HepG2 (cell line): ENCODE measurements at regions of chr17 and their contacts with region 1.

Region 1: GRCh38 chr17:74873038-74873873 is 462 bp upstream of the FDXR start:
- DNase-seq: peak; percentile 100
- ATAC-seq: peak; percentile 87
- H3K4me3 ChIP-seq: peak overlapping the region; percentile 70 to 95 (median 85)
- H3K27ac ChIP-seq: peak overlapping the region; percentile 70
- H3K4me1 ChIP-seq: peaks cover 84% of the 10 kb centered on the region
- H3K27me3 ChIP-seq: peaks cover 0 to 7% of the 10 kb centered on the region in 2 experiments; a peak in 4 of 5 replicates
- CTCF ChIP-seq: no peak
- EP300 ChIP-seq: peak; percentile 18 to 55; a peak in 1 of 4 replicates
- POLR2A ChIP-seq: peak; percentile 96 to 98
- RAD21 ChIP-seq: no peak; the same call in 1 of the 2 replicates

Region 2: GRCh38 chr17:74430706-74431567 is 442.3 kb before region 1 on chr17:
- CTCF ChIA-PET with region 1: no interaction called
- POLR2A ChIA-PET with region 1: interaction called, 14 read pairs
- in situ Hi-C with region 1: no loop called
- intact Hi-C with region 1: no loop called
- DNase-seq: peak; percentile 95
- ATAC-seq: peak; percentile 58
- H3K4me3 ChIP-seq: peak overlapping the region; percentile 82 to 94 (median 89)
- H3K27ac ChIP-seq: peak overlapping the region; percentile 98
- H3K4me1 ChIP-seq: peaks cover 69% of the 10 kb centered on the region
- H3K27me3 ChIP-seq: no peaks in the 10 kb centered on the region; a peak in 1 of 5 replicates
- CTCF ChIP-seq: peak; percentile 45
- EP300 ChIP-seq: peak in 1 of 2 experiments; percentile 55; a peak in 2 of 4 replicates
- POLR2A ChIP-seq: peak in 1 of 2 experiments; percentile 61; a peak in 3 of 4 replicates
- RAD21 ChIP-seq: peak; percentile 37

Region 3: DNA sequence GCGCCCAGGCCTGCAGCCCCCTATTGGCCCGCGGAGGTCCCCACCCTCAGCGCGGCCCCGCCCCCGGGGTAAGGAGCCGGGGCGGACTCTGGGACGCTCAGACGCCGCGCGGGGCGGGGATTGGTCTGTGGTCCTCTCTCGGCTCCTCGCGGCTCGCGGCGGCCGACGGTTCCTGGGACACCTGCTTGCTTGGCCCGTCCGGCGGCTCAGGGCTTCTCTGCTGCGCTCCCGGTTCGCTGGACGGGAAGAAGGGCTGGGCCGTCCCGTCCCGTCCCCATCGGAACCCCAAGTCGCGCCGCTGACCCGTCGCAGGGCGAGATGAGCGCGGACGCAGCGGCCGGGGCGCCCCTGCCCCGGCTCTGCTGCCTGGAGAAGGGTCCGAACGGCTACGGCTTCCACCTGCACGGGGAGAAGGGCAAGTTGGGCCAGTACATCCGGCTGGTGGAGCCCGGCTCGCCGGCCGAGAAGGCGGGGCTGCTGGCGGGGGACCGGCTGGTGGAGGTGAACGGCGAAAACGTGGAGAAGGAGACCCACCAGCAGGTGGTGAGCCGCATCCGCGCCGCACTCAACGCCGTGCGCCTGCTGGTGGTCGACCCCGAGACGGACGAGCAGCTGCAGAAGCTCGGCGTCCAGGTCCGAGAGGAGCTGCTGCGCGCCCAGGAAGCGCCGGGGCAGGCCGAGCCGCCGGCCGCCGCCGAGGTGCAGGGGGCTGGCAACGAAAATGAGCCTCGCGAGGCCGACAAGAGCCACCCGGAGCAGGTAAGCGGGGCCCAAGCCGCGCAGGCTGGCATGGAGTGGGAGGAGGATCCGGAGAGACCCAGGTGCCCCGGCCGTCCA is 124.5 kb before region 1 on chr17 and contains the start of gene NHERF1:
- CTCF ChIA-PET with region 1: no interaction called
- POLR2A ChIA-PET with region 1: interaction called, 46 read pairs
- in situ Hi-C with region 1: no loop called
- intact Hi-C with region 1: no loop called
- DNase-seq: peak; percentile 88
- ATAC-seq: peak; percentile 65
- H3K4me3 ChIP-seq: peak within 1 kb of the TSS; percentile 95 to 99 (median 99)
- H3K27ac ChIP-seq: peak within 1 kb of the TSS; percentile 96
- H3K4me1 ChIP-seq: peaks cover 70% of the 10 kb centered on the region
- H3K27me3 ChIP-seq: no peaks in the 10 kb centered on the region; a peak in 1 of 5 replicates
- CTCF ChIP-seq: peak; percentile 57
- EP300 ChIP-seq: 0 out of 4 replicates have a peak, but pooled peaks of 1 of the 2 experiments have one; percentile 22
- POLR2A ChIP-seq: peak; percentile 99 to 100
- RAD21 ChIP-seq: peak; percentile 68
- total RNA-seq, gene NHERF1: 138 and 169 TPM in 2 replicates

Region 4: DNA sequence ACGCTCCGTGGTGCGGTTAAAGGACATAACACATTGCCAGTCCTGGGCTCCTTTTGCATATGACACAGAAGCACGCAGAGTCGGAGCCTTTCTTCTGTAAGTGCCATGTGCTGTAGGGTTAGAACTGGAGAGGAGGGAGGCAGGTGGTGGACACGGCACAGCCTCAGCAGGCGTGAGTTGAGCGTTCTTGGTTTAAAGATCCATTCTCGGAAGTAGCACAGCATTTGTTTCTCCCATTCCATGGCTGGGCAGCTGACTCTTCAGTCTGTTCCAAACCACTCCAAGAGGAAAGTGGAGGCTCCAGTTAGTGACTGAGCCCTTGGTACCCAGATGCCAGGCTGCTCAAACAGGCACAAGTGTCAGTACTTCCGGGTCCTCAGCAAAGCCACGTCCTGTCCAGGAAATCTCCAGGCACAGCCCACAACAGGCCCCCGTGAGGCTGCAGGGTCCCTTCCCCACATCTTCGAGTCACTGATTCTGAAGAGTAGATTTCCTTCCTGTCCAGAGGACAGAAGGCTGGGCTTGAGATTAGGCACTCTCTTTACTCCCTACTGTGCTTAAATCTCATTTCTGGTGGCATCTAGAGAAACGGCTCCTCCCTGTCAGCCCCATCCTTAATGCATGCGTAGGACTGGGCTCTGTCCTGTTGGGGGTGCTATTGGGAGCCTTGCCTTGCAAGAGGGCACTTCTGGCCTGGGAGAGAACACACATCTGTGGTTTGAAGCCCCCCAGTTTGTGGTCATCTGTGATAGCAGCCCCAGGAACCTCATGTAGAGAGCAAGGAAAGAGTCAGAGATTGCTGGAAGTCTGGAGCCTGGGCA is 57.5 kb before region 1 on chr17:
- CTCF ChIA-PET with region 1: no interaction called
- POLR2A ChIA-PET with region 1: no interaction called
- in situ Hi-C with region 1: no loop called
- intact Hi-C with region 1: no loop called
- DNase-seq: no peak
- ATAC-seq: no peak
- H3K4me3 ChIP-seq: no peak overlapping the region
- H3K27ac ChIP-seq: no peak overlapping the region
- H3K4me1 ChIP-seq: no peaks in the 10 kb centered on the region
- H3K27me3 ChIP-seq: no peaks in the 10 kb centered on the region
- CTCF ChIP-seq: peak; percentile 43
- EP300 ChIP-seq: no peak
- POLR2A ChIP-seq: no peak
- RAD21 ChIP-seq: no peak

Region 5: DNA sequence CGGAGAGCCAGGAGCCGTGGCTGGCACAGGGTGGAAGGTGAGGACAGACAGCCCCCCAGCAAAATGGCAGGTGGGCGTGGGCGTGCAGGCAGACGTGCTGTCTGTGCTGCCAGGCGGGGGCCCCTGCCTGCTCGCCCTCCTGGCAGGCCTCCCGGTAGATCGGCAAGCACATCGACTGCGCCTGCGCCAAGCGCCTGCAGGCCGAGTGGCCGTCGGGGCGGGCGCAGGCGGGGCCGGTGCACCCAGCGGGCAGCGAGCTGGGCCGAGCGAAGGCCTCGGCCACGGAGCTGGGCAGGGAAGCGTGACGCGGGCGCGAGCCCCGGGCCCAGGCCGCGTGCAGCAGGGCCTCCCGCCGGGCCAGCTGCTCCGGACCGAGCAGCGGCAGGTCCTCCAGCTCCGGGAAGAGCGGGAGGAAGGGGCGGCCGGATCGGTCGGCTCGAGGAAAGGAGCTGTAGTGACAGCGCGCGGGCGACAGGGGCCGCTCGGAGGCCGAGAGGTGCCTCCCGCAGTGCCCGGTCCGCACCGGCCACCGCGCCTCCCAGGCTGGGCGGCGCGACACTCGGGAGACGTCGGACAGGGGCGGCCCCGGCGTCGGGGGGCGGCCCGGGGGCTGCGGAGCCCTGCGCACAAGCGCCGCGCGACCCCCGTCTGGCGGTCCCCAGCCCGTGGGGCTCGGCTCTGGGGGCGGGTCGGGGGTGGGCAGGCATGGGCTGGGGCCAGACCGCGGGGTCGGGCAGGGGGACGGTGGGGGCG is 30.5 kb before region 1 on chr17:
- CTCF ChIA-PET with region 1: no interaction called
- POLR2A ChIA-PET with region 1: interaction called, 15 read pairs
- in situ Hi-C with region 1: no loop called
- intact Hi-C with region 1: no loop called
- DNase-seq: peak; percentile 52
- ATAC-seq: peak; percentile 84
- H3K4me3 ChIP-seq: peak overlapping the region; percentile 23 to 71 (median 50); a peak in 5 of 6 replicates
- H3K27ac ChIP-seq: no peak overlapping the region
- H3K4me1 ChIP-seq: peaks cover 16% of the 10 kb centered on the region
- H3K27me3 ChIP-seq: peaks cover 0 to 13% of the 10 kb centered on the region in 2 experiments; a peak in 2 of 5 replicates
- CTCF ChIP-seq: peak; percentile 78
- EP300 ChIP-seq: no peak
- POLR2A ChIP-seq: no peak; a peak in 1 of 4 replicates
- RAD21 ChIP-seq: peak; percentile 94

Region 6: GRCh38 chr17:74892013-74892841 is 19.0 kb after region 1 on chr17:
- CTCF ChIA-PET with region 1: no interaction called
- POLR2A ChIA-PET with region 1: interaction called, 10 read pairs
- in situ Hi-C with region 1: no loop called
- intact Hi-C with region 1: no loop called
- DNase-seq: no peak
- ATAC-seq: peak; percentile 49
- H3K4me3 ChIP-seq: no peak overlapping the region
- H3K27ac ChIP-seq: no peak overlapping the region
- H3K4me1 ChIP-seq: peaks cover 26% of the 10 kb centered on the region
- H3K27me3 ChIP-seq: peaks cover 11 to 80% of the 10 kb centered on the region in 2 experiments
- CTCF ChIP-seq: no peak
- EP300 ChIP-seq: no peak
- POLR2A ChIP-seq: no peak
- RAD21 ChIP-seq: no peak

Region 7: GRCh38 chr17:74935585-74936469 is 62.6 kb after region 1 on chr17 and contains the start of gene OTOP3:
- CTCF ChIA-PET with region 1: no interaction called
- POLR2A ChIA-PET with region 1: no interaction called
- in situ Hi-C with region 1: no loop called
- intact Hi-C with region 1: no loop called
- DNase-seq: no peak
- ATAC-seq: peak; percentile 48
- H3K4me3 ChIP-seq: peak within 1 kb of the TSS in 1 of 3 experiments; percentile 7; a peak in 1 of 6 replicates
- H3K27ac ChIP-seq: no peak within 1 kb of the TSS
- H3K4me1 ChIP-seq: no peaks in the 10 kb centered on the region
- H3K27me3 ChIP-seq: peaks cover 18 to 91% of the 10 kb centered on the region in 2 experiments
- CTCF ChIP-seq: no peak
- EP300 ChIP-seq: no peak
- POLR2A ChIP-seq: no peak
- RAD21 ChIP-seq: no peak
- total RNA-seq, gene OTOP3: not detected in 2 replicates

Region 8: GRCh38 chr17:74961657-74962490 is 88.6 kb after region 1 on chr17:
- CTCF ChIA-PET with region 1: no interaction called
- POLR2A ChIA-PET with region 1: interaction called, 16 read pairs
- in situ Hi-C with region 1: no loop called
- intact Hi-C with region 1: no loop called
- DNase-seq: peak; percentile 85
- ATAC-seq: peak; percentile 70
- H3K4me3 ChIP-seq: no peak overlapping the region
- H3K27ac ChIP-seq: no peak overlapping the region
- H3K4me1 ChIP-seq: peaks cover 6% of the 10 kb centered on the region; the same call in 1 of the 2 replicates
- H3K27me3 ChIP-seq: no peaks in the 10 kb centered on the region; a peak in 2 of 5 replicates
- CTCF ChIP-seq: peak; percentile 93
- EP300 ChIP-seq: no peak
- POLR2A ChIP-seq: no peak
- RAD21 ChIP-seq: peak; percentile 95

Region 9: DNA sequence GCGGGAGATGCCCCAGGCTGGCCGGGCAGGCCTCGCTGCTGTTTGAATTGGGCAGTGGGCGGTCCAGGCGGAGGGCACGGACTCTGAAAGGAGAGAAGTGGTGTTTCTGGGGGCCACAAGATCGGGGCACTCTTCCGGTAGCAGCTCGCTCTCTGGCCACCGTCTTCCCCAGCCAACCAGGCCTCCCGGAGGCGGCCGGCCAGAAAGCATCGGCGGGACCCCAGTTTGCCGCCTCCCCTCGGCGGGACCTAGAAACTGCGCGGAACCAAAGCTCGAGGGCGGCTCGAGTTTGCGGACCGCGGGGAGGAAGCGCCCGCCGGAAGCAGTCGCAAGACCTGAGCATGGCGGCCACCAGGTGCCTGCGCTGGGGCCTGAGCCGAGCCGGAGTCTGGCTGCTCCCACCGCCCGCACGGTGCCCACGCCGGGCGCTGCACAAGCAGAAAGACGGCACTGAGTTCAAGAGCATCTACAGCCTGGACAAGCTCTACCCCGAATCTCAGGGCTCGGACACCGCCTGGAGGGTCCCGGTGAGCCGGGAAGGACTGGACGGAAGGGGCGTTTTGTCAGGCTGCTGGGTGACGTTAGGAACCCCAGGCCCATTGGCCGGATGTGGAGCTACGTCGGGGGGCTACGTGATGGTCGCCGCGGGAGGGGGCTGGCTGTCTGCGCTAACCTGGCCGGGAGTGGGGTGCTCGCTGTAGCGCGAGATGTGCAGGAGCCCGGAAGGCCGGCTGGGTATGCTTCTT is 139.3 kb after region 1 on chr17 and contains the start of gene MRPL58:
- CTCF ChIA-PET with region 1: no interaction called
- POLR2A ChIA-PET with region 1: interaction called, 21 read pairs
- in situ Hi-C with region 1: no loop called
- intact Hi-C with region 1: no loop called
- DNase-seq: peak; percentile 88
- ATAC-seq: peak; percentile 91
- H3K4me3 ChIP-seq: peak within 1 kb of the TSS; percentile 71 to 96 (median 85)
- H3K27ac ChIP-seq: peak within 1 kb of the TSS; percentile 85
- H3K4me1 ChIP-seq: peaks cover 28% of the 10 kb centered on the region
- H3K27me3 ChIP-seq: no peaks in the 10 kb centered on the region; a peak in 2 of 5 replicates
- CTCF ChIP-seq: peak; percentile 74
- EP300 ChIP-seq: peak; percentile 48 to 72; a peak in 3 of 4 replicates
- POLR2A ChIP-seq: peak; percentile 81 to 89; a peak in 3 of 4 replicates
- RAD21 ChIP-seq: peak; percentile 80
- total RNA-seq, gene MRPL58: 68.9 and 101 TPM in 2 replicates

Region 10: GRCh38 chr17:75504347-75504964 is 631.2 kb after region 1 on chr17:
- CTCF ChIA-PET with region 1: no interaction called
- POLR2A ChIA-PET with region 1: no interaction called
- in situ Hi-C with region 1: no loop called
- intact Hi-C with region 1: no loop called
- DNase-seq: peak; percentile 51
- ATAC-seq: peak; percentile 71
- H3K4me3 ChIP-seq: no peak overlapping the region
- H3K27ac ChIP-seq: no peak overlapping the region
- H3K4me1 ChIP-seq: peaks cover 32% of the 10 kb centered on the region
- H3K27me3 ChIP-seq: no peaks in the 10 kb centered on the region
- CTCF ChIP-seq: peak; percentile 89
- EP300 ChIP-seq: no peak
- POLR2A ChIP-seq: no peak
- RAD21 ChIP-seq: peak; percentile 91